ENCODE measurements at regions of chr15 and their contacts with region 1.

Region 1: GRCh38 chr15:83066734-83067637 is at the start of gene BTBD1:
- DNase-seq: peak; percentile 92 to 99
- H3K4me3 ChIP-seq: peak within 1 kb of the TSS; percentile 91 to 98
- H3K27ac ChIP-seq: peak within 1 kb of the TSS; percentile 97 to 99
- H3K4me1 ChIP-seq: peaks cover 17 to 25% of the 10 kb centered on the region in 2 donors
- H3K27me3 ChIP-seq: no peaks in the 10 kb centered on the region
- CTCF ChIP-seq: peak in 1 of 3 experiments; percentile 5
- total RNA-seq, gene BTBD1: 63.9 TPM

Region 2: DNA sequence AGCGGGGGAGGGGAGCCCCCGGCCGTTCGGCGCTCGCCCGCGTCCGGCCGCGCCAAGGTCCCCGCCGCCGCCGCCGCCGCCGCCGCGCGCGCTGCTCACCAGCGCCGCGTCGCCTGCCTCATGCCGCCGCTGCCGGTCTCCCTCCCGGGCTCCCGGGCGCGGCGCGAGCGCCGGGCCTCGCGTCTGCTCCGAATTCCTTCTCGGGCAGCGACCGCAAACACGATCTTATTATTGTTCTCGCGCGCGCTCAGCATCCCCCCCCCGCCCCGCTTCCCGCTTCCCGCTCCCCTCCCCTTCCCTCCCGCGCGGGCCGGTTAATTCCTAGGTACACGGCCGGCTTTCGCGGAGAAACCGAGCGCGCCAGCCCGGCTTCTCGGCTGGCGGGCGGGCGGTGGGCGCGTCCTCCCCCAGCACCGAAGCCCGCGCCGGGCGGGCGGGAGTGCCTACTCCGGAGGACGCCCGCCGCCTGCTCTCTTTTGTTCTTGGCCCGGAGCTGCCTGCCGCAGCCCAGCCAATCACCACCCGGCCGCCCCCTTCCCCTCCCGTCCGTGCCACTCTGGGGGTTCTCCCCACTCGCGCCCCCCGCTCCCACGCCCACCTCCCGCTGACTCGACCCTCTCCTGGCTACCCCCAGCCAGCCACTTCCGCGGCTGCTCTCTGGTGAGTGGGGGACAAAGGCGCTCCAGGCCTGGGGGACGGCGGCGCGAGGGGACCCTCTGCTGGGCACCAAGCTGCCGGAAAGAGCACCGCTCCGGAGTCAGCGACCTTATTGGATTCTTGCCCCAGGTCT is 140.8 kb after region 1 on chr15 and contains the start of gene HDGFL3:
- intact Hi-C with region 1: loop called (anchors 1 kb)
- DNase-seq: peak in 1 of 2 donors; percentile 73
- H3K4me3 ChIP-seq: peak within 1 kb of the TSS; percentile 79 to 100
- H3K27ac ChIP-seq: peak within 1 kb of the TSS; percentile 89 to 100
- H3K4me1 ChIP-seq: peaks cover 4% of the 10 kb centered on the region in 2 donors
- H3K27me3 ChIP-seq: no peaks in the 10 kb centered on the region
- CTCF ChIP-seq: no peak
- total RNA-seq, gene HDGFL3: 20.8 TPM